ENCODE measurements at regions of chr12 and their contacts with region 1.

Region 1: GRCh38 chr12:79634957-79635471 is 55.8 kb downstream of the PAWR start:
- DNase-seq: no peak
- ATAC-seq: no peak
- H3K4me3 ChIP-seq: no peak overlapping the region
- H3K27ac ChIP-seq: no peak overlapping the region
- H3K4me1 ChIP-seq: no peaks in the 10 kb centered on the region
- H3K27me3 ChIP-seq: no peaks in the 10 kb centered on the region
- CTCF ChIP-seq: no peak

Region 2: DNA sequence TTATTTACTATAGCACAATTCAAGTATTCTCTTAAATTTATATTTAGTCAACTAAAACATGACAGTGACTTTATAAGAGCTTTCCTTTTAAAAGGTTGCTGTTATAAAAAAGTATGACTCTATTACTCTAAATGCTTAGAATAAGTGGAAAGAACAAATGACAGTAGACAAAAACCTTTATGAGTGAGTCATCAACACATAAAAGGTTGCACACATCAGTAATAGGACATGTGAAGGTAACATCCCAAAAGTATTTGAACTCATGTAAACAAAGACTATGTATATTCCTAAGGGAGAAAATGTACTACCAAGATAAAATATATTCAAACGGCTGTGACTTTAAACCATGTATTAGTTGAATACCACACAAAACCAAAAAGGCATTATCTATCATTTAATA is 43.0 kb before region 1 on chr12:
- CTCF ChIA-PET with region 1: no interaction called
- POLR2A ChIA-PET with region 1: no interaction called
- intact Hi-C with region 1: loop called (anchors 1 kb)
- DNase-seq: peak; percentile 28
- ATAC-seq: peak; percentile 59
- H3K4me3 ChIP-seq: no peak overlapping the region
- H3K27ac ChIP-seq: no peak overlapping the region
- H3K4me1 ChIP-seq: no peaks in the 10 kb centered on the region
- H3K27me3 ChIP-seq: no peaks in the 10 kb centered on the region
- CTCF ChIP-seq: no peak

Measured in PC-3 (cell line).